CD4-positive, alpha-beta memory T cell (primary cell): ENCODE measurements at regions of chr4 and their contacts with region 1.

Region 1: DNA sequence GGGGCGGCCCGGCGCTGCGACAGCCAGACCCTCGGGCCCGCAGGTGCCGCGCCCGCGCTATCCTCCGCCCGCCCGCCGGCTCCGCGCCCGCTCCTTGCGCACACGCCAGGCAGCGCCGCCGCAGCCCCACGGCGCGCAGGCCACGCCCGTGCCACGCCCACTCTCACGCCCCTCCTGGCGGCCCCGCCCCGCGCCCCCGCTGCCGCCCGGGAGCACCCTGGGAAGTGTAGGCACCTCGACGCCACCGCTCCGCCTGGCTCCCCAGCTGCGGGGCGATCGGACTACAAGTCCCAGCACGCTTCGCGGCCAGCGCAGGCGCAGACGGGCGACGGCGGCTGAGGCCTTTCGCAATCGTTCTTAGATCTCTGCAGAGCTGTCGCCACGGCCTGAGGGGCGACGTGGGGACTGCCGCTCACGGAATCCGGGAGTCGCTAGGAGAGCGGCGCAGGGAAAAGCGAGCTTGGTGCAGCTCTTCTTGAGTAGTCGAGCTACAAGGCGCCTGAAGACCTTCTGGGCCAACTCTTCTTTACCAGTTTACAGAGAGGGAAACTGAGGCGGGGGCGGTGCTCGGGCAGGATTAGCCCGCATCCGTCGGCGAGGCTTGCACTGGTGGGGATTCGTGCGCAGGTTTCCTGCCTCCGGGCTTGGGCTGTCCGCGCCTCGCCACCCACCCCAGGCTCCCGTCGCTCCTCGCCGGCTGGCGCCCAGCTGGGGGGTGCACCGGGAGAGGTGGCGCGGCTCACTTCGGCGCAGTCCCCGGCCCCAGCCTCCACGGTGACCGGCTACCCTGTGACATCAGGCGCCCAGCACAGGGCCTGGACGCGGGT is at the start of gene ABLIM2:
- DNase-seq: peak; percentile 96 to 100 (median 99)
- H3K4me3 ChIP-seq: peak within 1 kb of the TSS; percentile 78 to 85
- H3K4me3 Mint-ChIP-seq: peak within 1 kb of the TSS; percentile 92 to 99 (median 97)
- H3K27ac ChIP-seq: peak within 1 kb of the TSS; percentile 61
- H3K27ac Mint-ChIP-seq: peak within 1 kb of the TSS; percentile 85 to 98 (median 95)
- H3K4me1 ChIP-seq: peaks cover 15% of the 10 kb centered on the region
- H3K4me1 Mint-ChIP-seq: peaks cover 11 to 29% (median 19%) of the 10 kb centered on the region in 4 donors
- H3K27me3 ChIP-seq: peaks cover 5% of the 10 kb centered on the region
- H3K27me3 Mint-ChIP-seq: peaks cover 1 to 6% of the 10 kb centered on the region in 2 donors
- total RNA-seq, gene ABLIM2: 6.2 to 7.9 TPM

Region 2: GRCh38 chr4:7649741-7650531 is 509.0 kb before region 1 on chr4:
- CTCF ChIA-PET with region 1: no interaction called
- POLR2A ChIA-PET with region 1: no interaction called
- intact Hi-C with region 1: no loop called
- DNase-seq: peak; percentile 47 to 83 (median 59)
- H3K4me3 ChIP-seq: no peak overlapping the region
- H3K4me3 Mint-ChIP-seq: peak overlapping the region; percentile 41 to 73 (median 62)
- H3K27ac ChIP-seq: no peak overlapping the region
- H3K27ac Mint-ChIP-seq: peak overlapping the region; percentile 70 to 89 (median 84)
- H3K4me1 ChIP-seq: peaks cover 39% of the 10 kb centered on the region
- H3K4me1 Mint-ChIP-seq: peaks cover 16 to 62% (median 34%) of the 10 kb centered on the region in 4 donors
- H3K27me3 ChIP-seq: no peaks in the 10 kb centered on the region
- H3K27me3 Mint-ChIP-seq: peaks cover under 1 to 3% of the 10 kb centered on the region in 2 donors

Region 3: DNA sequence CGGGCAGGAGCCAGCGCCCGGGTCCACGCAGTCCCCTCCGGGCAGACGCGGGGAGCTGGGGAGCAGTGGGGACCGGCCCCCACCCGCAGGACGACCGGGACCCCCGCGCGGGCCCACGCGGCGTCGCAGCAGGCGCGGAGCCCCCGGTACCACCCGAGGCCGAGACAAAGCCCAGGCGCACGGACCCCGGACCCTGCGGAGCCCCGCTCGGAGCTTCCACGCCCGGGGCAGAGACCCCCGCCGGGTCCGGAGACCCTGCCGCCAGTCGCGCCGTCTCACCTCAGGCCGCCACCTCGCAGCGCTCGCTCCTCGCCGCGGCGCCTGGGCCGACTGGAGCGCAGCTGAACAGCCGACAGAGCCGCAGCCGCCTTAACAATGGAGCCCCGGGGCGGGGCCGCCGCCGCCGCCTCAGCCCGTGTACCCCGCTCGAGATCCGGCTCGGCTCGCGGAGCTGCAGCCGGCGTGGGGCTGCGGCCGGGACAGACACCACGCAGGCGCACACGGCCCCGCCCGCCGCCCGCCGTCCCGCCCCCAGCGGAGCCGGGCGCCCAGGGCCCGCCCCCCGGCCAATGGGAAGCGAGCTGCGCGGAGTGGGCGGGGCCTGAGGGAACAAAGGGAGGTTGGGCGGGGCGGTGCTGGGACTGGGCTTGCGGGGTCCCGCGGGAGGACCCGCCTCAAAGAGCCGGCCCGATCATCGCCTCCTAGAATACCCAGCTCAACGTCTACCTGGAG is 219.4 kb before region 1 on chr4 and contains the start of gene AFAP1:
- CTCF ChIA-PET with region 1: no interaction called
- POLR2A ChIA-PET with region 1: no interaction called
- intact Hi-C with region 1: loop called (anchors 10 kb)
- DNase-seq: peak; percentile 86 to 94 (median 92)
- H3K4me3 ChIP-seq: peak within 1 kb of the TSS; percentile 58 to 61
- H3K4me3 Mint-ChIP-seq: peak within 1 kb of the TSS; percentile 66 to 88 (median 74)
- H3K27ac ChIP-seq: peak within 1 kb of the TSS; percentile 70
- H3K27ac Mint-ChIP-seq: peak within 1 kb of the TSS; percentile 23 to 83 (median 45)
- H3K4me1 ChIP-seq: peaks cover 16% of the 10 kb centered on the region
- H3K4me1 Mint-ChIP-seq: peaks cover 12 to 39% (median 26%) of the 10 kb centered on the region in 4 donors
- H3K27me3 ChIP-seq: no peaks in the 10 kb centered on the region
- H3K27me3 Mint-ChIP-seq: peaks cover 0 to 2% of the 10 kb centered on the region in 2 donors
- total RNA-seq, gene AFAP1: 18.8 to 21.8 TPM

Region 4: GRCh38 chr4:8198906-8199593 is 40.1 kb after region 1 on chr4 and contains the start of gene SH3TC1:
- CTCF ChIA-PET with region 1: no interaction called
- POLR2A ChIA-PET with region 1: interaction called, 25 read pairs
- intact Hi-C with region 1: loop called (anchors 2 kb)
- DNase-seq: peak; percentile 45 to 69 (median 62)
- H3K4me3 ChIP-seq: peak within 1 kb of the TSS; percentile 55 to 85
- H3K4me3 Mint-ChIP-seq: peak within 1 kb of the TSS; percentile 94 to 97 (median 96)
- H3K27ac ChIP-seq: peak within 1 kb of the TSS; percentile 84
- H3K27ac Mint-ChIP-seq: peak within 1 kb of the TSS; percentile 96 to 99 (median 98)
- H3K4me1 ChIP-seq: peaks cover 54% of the 10 kb centered on the region
- H3K4me1 Mint-ChIP-seq: peaks cover 22 to 57% (median 42%) of the 10 kb centered on the region in 4 donors
- H3K27me3 ChIP-seq: no peaks in the 10 kb centered on the region
- H3K27me3 Mint-ChIP-seq: no peaks in the 10 kb centered on the region
- total RNA-seq, gene SH3TC1: 37.1 to 41.3 TPM

Region 5: DNA sequence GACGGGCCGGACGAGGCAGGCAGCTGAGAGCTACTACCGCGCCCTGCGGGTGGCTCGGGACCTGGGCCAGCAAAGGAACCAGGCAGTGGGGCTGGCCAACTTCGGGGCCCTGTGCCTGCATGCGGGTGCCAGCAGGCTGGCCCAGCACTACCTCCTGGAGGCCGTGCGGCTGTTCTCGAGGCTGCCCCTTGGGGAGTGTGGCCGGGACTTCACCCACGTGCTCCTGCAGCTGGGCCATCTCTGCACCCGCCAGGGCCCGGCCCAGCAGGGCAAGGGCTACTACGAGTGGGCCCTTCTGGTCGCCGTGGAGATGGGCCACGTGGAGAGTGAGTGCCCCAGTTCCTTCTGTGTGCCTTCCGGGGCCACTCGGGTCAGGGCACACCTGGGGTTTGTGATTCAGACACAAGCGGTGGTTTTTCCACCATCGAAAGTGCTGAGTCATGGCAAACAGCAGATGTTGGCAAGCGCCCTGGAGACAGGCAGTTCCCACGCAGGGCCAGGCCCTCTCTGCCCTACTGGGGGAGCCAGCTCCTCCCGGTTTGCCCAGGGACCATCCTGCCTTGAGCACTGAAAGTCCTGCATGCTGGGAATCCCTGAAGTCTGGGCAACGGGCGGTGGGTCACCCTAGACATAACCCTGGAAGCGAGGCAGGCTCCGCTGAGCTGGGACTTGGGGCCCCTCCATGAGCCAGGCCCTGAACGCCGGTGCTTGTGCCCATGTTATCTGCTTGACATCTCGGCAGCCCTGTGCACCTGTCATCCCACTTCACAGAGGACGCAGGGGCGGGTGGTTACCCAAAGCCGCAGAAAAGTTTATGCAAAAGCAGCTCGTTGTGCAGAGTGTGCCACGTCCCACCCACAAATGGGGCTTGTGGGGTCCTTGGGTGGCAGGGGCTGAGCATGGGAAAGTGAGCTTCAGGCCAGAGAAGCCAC is 69.7 kb after region 1 on chr4:
- CTCF ChIA-PET with region 1: no interaction called
- POLR2A ChIA-PET with region 1: interaction called, 8 read pairs
- intact Hi-C with region 1: loop called (anchors 2 kb)
- DNase-seq: peak; percentile 77 to 91 (median 81)
- H3K4me3 ChIP-seq: peak overlapping the region in 1 of 2 donors; percentile 47
- H3K4me3 Mint-ChIP-seq: peak overlapping the region; percentile 52 to 84 (median 70)
- H3K27ac ChIP-seq: peak overlapping the region; percentile 65
- H3K27ac Mint-ChIP-seq: peak overlapping the region; percentile 68 to 94 (median 89)
- H3K4me1 ChIP-seq: peaks cover 46% of the 10 kb centered on the region
- H3K4me1 Mint-ChIP-seq: peaks cover 25 to 46% (median 37%) of the 10 kb centered on the region in 4 donors
- H3K27me3 ChIP-seq: no peaks in the 10 kb centered on the region
- H3K27me3 Mint-ChIP-seq: no peaks in the 10 kb centered on the region

Region 6: GRCh38 chr4:8428293-8429097 is 269.6 kb after region 1 on chr4:
- CTCF ChIA-PET with region 1: no interaction called
- POLR2A ChIA-PET with region 1: interaction called, 3 read pairs
- intact Hi-C with region 1: loop called (anchors 10 kb)
- DNase-seq: peak; percentile 84 to 96 (median 90)
- H3K4me3 ChIP-seq: peak overlapping the region; percentile 30 to 87
- H3K4me3 Mint-ChIP-seq: peak overlapping the region; percentile 93 to 98 (median 96)
- H3K27ac ChIP-seq: peak overlapping the region; percentile 66
- H3K27ac Mint-ChIP-seq: peak overlapping the region; percentile 92 to 97 (median 95)
- H3K4me1 ChIP-seq: peaks cover 22% of the 10 kb centered on the region
- H3K4me1 Mint-ChIP-seq: peaks cover 20 to 49% (median 29%) of the 10 kb centered on the region in 4 donors
- H3K27me3 ChIP-seq: no peaks in the 10 kb centered on the region
- H3K27me3 Mint-ChIP-seq: no peaks in the 10 kb centered on the region

Region 7: GRCh38 chr4:8440492-8441341 is 281.8 kb after region 1 on chr4 and contains the starts of genes ACOX3 and TRMT44:
- CTCF ChIA-PET with region 1: no interaction called
- POLR2A ChIA-PET with region 1: interaction called, 5 read pairs
- intact Hi-C with region 1: loop called (anchors 5 kb)
- DNase-seq: peak; percentile 92 to 99 (median 95)
- H3K4me3 ChIP-seq: peak within 1 kb of the TSS; percentile 85 to 88
- H3K4me3 Mint-ChIP-seq: peak within 1 kb of the TSS; percentile 93 to 100 (median 99)
- H3K27ac ChIP-seq: peak within 1 kb of the TSS; percentile 91
- H3K27ac Mint-ChIP-seq: peak within 1 kb of the TSS; percentile 98 to 100 (median 99)
- H3K4me1 ChIP-seq: peaks cover 58% of the 10 kb centered on the region
- H3K4me1 Mint-ChIP-seq: peaks cover 52 to 84% (median 71%) of the 10 kb centered on the region in 4 donors
- H3K27me3 ChIP-seq: no peaks in the 10 kb centered on the region
- H3K27me3 Mint-ChIP-seq: no peaks in the 10 kb centered on the region
- total RNA-seq, gene ACOX3: 16.3 to 17.3 TPM
- total RNA-seq, gene TRMT44: 29.6 to 33.0 TPM

Region 8: GRCh38 chr4:9146967-9147366 is 988.0 kb after region 1 on chr4:
- CTCF ChIA-PET with region 1: no interaction called
- POLR2A ChIA-PET with region 1: interaction called, 3 read pairs
- intact Hi-C with region 1: loop called (anchors 5 kb)
- DNase-seq: no peak
- H3K4me3 ChIP-seq: no peak overlapping the region
- H3K4me3 Mint-ChIP-seq: no peak overlapping the region
- H3K27ac ChIP-seq: no peak overlapping the region
- H3K27ac Mint-ChIP-seq: no peak overlapping the region
- H3K4me1 ChIP-seq: no peaks in the 10 kb centered on the region
- H3K4me1 Mint-ChIP-seq: peaks cover 3 to 5% (median 4%) of the 10 kb centered on the region in 4 donors
- H3K27me3 ChIP-seq: no peaks in the 10 kb centered on the region
- H3K27me3 Mint-ChIP-seq: no peaks in the 10 kb centered on the region